Activated CD8-positive, alpha-beta T cell treated with anti-CD3 and anti-CD28 coated beads, Interleukin-2, amount 10 ng/mL, durations not matched to agents 7 days and 5 days (primary cell): ENCODE measurements at regions of chr12 and their contacts with region 1.

Region 1: GRCh38 chr12:6423267-6424007 is 21.3 kb upstream of the CD27 start:
- DNase-seq: peak; percentile 88
- ATAC-seq: peak; percentile 75
- H3K4me3 Mint-ChIP-seq: no peak overlapping the region
- H3K27ac Mint-ChIP-seq: peak overlapping the region; percentile 83
- H3K4me1 Mint-ChIP-seq: peaks cover 49% of the 10 kb centered on the region
- H3K27me3 Mint-ChIP-seq: no peaks in the 10 kb centered on the region

Region 2: GRCh38 chr12:6335451-6336078 is 87.9 kb before region 1 on chr12:
- CTCF ChIA-PET with region 1: interaction called, 46 read pairs
- POLR2A ChIA-PET with region 1: interaction called, 13 read pairs
- DNase-seq: peak; percentile 93
- ATAC-seq: peak; percentile 67
- H3K4me3 Mint-ChIP-seq: no peak overlapping the region
- H3K27ac Mint-ChIP-seq: no peak overlapping the region
- H3K4me1 Mint-ChIP-seq: peaks cover 9% of the 10 kb centered on the region
- H3K27me3 Mint-ChIP-seq: no peaks in the 10 kb centered on the region

Region 3: GRCh38 chr12:6352193-6353173 is 71.0 kb before region 1 on chr12:
- CTCF ChIA-PET with region 1: no interaction called
- POLR2A ChIA-PET with region 1: no interaction called
- DNase-seq: no peak
- ATAC-seq: no peak
- H3K4me3 Mint-ChIP-seq: no peak overlapping the region
- H3K27ac Mint-ChIP-seq: no peak overlapping the region
- H3K4me1 Mint-ChIP-seq: peaks cover 13% of the 10 kb centered on the region
- H3K27me3 Mint-ChIP-seq: peaks cover 9% of the 10 kb centered on the region

Region 4: DNA sequence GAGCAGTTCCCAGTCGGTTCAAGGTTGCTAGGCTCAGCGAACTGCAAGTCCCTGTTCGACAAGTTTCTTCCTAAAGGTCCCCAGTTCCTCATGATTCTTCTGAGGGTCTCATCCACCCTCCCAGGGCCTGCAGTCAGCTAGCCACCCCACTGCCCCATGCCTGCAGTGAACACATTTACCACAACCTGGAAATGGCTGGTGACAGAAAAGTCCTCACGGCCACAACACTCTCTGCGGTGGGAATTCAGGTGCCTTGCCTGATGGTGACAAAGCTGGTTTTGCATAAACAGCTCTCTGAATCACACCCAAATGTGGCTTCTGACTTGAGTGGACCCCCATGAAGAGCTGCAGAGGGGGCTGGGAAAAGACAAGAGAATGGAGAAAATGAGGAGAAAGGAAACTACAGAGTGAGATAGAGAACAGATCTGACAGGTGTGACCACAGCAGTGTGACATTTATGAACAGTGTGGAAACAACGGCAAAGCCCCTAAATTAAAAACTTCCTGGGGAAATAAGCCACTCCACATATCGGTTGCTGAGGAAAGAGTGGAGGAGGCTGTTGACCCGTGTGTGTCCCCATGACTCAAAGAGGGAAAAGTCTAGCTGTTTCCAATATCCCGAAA is 20.0 kb after region 1 on chr12:
- CTCF ChIA-PET with region 1: interaction called, 51 read pairs
- POLR2A ChIA-PET with region 1: interaction called, 8 read pairs
- DNase-seq: peak; percentile 49
- ATAC-seq: peak; percentile 29
- H3K4me3 Mint-ChIP-seq: peak overlapping the region; percentile 90
- H3K27ac Mint-ChIP-seq: peak overlapping the region; percentile 96
- H3K4me1 Mint-ChIP-seq: peaks cover 68% of the 10 kb centered on the region
- H3K27me3 Mint-ChIP-seq: no peaks in the 10 kb centered on the region

Region 5: DNA sequence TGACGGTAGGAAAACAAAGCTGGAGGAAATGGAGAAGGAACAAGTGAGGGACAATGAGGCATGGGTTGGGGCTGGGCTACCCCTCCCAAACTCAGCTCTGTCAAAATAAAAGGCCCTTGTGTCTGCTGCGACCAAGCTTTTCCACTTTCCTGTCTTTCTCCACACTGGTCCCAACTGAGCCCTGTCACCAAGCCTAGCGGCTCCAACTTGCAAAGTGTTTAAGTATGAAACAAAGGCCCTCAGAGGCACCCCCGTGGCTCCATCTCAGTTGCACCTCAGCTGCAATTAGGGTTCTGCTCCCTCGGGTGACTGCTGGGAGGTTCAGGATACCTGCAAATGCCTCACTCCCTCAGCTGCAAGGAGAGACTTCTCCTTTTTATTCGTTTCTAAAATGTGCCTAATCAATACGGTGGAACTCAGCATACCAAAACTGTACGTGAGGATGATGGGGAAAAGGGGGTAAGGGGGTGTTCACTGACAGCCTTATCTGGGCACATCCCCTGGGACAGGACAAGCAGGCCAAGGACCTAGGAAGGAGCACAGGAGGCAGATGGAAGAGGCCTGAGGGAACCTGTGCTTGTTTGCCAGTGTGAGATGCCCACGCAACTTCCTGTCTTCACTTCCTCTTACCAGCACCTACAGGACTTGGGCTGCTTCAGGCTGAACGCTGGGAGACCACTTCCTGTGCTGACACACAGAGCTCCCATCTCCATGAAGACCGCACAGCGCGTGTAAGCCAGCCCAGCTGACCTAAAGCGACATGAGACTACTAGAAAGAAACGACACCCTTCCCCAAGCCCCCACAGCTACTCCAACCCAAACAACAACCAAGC is 38.2 kb after region 1 on chr12:
- CTCF ChIA-PET with region 1: interaction called, 288 read pairs
- POLR2A ChIA-PET with region 1: interaction called, 49 read pairs
- DNase-seq: peak; percentile 95
- ATAC-seq: peak; percentile 79
- H3K4me3 Mint-ChIP-seq: peak overlapping the region; percentile 71
- H3K27ac Mint-ChIP-seq: peak overlapping the region; percentile 99
- H3K4me1 Mint-ChIP-seq: peaks cover 92% of the 10 kb centered on the region
- H3K27me3 Mint-ChIP-seq: no peaks in the 10 kb centered on the region

Region 6: GRCh38 chr12:6493497-6494257 is 70.2 kb after region 1 on chr12 and contains the start of gene NCAPD2:
- CTCF ChIA-PET with region 1: interaction called, 21 read pairs
- POLR2A ChIA-PET with region 1: interaction called, 7 read pairs
- DNase-seq: peak; percentile 98
- ATAC-seq: peak; percentile 89
- H3K4me3 Mint-ChIP-seq: peak within 1 kb of the TSS; percentile 93
- H3K27ac Mint-ChIP-seq: peak within 1 kb of the TSS; percentile 99
- H3K4me1 Mint-ChIP-seq: peaks cover 33% of the 10 kb centered on the region
- H3K27me3 Mint-ChIP-seq: no peaks in the 10 kb centered on the region
- total RNA-seq, gene NCAPD2: 195 to 201 TPM

Region 7: DNA sequence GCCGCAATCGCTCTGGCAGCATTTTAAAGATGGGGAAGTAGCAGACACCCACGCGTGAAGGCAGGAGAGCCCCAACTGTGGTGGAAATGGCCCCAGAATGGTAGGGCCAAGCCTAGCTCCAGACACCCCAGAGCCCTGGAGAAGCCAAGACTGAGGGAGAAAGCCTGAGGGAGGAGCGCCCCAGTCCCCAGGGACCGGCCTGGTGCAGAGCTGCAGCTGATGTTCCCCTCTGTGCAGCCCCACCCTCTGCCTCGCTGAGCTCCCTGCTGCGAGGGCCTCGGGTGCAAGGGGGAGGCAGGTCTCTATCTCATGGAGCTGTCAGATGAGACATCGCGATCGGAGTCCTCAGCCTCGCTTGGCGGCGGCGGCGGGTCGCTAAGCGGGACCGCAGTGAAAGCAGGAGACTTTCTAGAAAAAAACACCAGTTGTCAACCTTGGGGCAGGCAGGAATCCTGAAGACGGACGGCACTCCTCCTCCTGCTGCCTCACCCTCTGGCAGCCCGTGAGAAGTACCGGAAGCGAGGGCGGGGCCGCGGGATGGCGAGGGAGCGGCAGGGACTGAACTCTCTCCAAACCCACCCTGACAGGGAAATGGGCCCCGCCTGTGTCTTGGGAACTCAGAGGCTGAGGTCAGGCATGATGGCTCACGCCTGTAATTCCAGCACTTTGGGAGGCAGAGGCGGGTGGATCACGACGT is 116.9 kb after region 1 on chr12:
- CTCF ChIA-PET with region 1: interaction called, 97 read pairs
- POLR2A ChIA-PET with region 1: interaction called, 24 read pairs
- DNase-seq: peak; percentile 69
- ATAC-seq: peak; percentile 38
- H3K4me3 Mint-ChIP-seq: peak overlapping the region; percentile 48
- H3K27ac Mint-ChIP-seq: peak overlapping the region; percentile 82
- H3K4me1 Mint-ChIP-seq: peaks cover 65% of the 10 kb centered on the region
- H3K27me3 Mint-ChIP-seq: no peaks in the 10 kb centered on the region